Adrenal gland (tissue), 19 donors: ENCODE measurements at regions of chrX and their contacts with region 1.

Region 1: DNA sequence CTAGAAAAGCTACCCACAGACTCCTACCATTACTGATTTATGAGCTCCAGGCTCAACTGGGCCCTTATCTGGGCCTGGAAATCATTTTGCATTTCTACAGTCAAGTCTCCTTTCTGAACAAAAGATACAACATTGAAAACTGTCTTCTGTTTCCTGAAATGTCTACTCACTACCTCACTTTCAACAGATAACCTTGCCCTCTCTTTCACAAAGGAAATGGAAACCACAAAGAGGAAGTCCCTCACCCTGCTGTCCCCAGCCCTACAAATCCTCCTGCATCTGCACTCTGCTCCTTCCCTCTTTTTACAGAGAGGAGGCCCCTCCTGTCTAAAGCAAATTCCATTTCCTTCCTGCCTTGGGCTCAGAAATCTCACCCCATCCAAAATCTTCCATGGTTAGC is 24.8 kb upstream of the CYBB start:
- DNase-seq: peak in 1 of 7 donors; percentile 21
- H3K4me3 ChIP-seq: no peak overlapping the region
- H3K27ac ChIP-seq: no peak overlapping the region
- H3K4me1 ChIP-seq: no peaks in the 10 kb centered on the region
- H3K27me3 ChIP-seq: no peaks in the 10 kb centered on the region
- CTCF ChIP-seq: no peak
- POLR2A ChIP-seq: no peak

Region 2: GRCh38 chrX:37818031-37818430 is 63.0 kb after region 1 on chrX:
- intact Hi-C with region 1: loop called in 1 of 2 experiments (anchors 10 kb)
- DNase-seq: no peak
- H3K4me3 ChIP-seq: no peak overlapping the region
- H3K27ac ChIP-seq: no peak overlapping the region
- H3K4me1 ChIP-seq: no peaks in the 10 kb centered on the region
- H3K27me3 ChIP-seq: peaks cover 15% of the 10 kb centered on the region
- CTCF ChIP-seq: no peak
- POLR2A ChIP-seq: no peak